ENCODE measurements at regions of chr17 and their contacts with region 1.

Region 1: GRCh38 chr17:40224718-40225550 is 5.8 kb downstream of the WIPF2 start:
- DNase-seq: no peak
- H3K4me3 ChIP-seq: no peak overlapping the region
- H3K27ac ChIP-seq: no peak overlapping the region
- H3K4me1 ChIP-seq: no peaks in the 10 kb centered on the region
- H3K27me3 ChIP-seq: no peaks in the 10 kb centered on the region
- CTCF ChIP-seq: no peak

Region 2: DNA sequence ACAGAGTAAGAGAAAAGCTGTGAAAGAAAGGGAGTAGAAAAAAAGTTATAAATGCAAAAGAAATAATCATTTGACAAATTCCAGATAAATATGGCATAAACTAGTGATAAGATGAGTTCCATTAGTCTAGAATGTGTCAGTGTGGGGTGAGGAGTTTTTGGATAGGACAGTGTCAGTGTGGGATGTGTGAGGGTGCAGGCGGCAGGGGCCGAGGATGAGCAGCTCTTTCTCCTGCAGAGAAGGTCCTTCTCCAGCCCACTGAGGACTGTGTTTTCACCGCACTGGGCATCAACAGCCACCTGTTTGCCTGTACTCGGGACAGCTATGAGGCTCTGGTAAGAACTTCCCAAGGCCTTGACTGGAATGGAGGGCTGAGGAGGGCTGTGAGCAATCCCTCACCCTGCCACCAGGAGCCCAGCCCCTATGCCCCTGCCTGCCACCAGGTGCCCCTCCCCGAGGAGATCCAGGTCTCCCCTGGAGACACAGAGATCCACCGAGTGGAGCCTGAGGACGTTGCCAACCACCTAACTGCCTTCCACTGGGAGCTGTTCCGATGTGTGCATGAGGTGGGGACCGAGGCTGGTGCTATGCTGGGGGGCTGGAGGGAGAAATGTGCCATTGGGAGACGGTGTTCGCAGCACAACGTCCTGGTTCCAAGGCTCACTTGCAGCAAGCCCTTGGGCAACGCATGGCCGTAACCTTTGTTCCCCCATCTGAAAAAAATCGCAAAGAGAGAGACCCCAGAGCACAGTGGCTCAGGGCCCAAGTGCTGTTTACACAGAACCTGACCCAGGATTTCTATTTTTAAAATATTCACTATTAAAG is 34.5 kb before region 1 on chr17:
- CTCF ChIA-PET with region 1: no interaction called
- dilution Hi-C with region 1: no loop called
- in situ Hi-C with region 1: no loop called
- intact Hi-C with region 1: no loop called
- DNase-seq: no peak
- H3K4me3 ChIP-seq: no peak overlapping the region
- H3K27ac ChIP-seq: no peak overlapping the region
- H3K4me1 ChIP-seq: peaks cover 24% of the 10 kb centered on the region
- H3K27me3 ChIP-seq: no peaks in the 10 kb centered on the region
- CTCF ChIP-seq: peak; percentile 28

Region 3: DNA sequence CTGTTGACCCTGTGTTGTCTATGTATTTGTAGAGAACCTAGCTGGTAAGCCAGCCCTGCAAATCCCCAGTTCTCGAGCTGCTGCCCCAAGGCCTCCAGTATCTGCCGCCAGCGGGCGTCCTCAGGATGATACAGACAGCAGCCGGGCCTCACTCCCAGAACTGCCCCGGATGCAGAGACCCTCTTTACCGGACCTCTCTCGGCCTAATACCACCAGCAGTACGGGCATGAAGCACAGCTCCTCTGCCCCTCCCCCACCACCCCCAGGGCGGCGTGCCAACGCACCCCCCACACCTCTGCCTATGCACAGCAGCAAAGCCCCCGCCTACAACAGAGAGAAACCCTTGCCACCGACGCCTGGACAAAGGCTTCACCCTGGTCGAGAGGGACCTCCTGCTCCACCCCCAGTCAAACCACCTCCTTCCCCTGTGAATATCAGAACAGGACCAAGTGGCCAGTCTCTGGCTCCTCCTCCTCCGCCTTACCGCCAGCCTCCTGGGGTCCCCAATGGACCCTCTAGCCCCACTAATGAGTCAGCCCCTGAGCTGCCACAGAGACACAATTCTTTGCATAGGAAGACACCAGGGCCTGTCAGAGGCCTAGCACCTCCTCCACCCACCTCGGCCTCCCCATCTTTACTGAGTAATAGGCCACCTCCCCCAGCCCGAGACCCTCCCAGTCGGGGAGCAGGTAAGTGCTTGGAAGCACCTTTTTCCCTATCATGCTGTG is 39.7 kb after region 1 on chr17:
- CTCF ChIA-PET with region 1: no interaction called
- dilution Hi-C with region 1: loop called (anchors 5 kb)
- in situ Hi-C with region 1: no loop called
- intact Hi-C with region 1: no loop called
- DNase-seq: no peak
- H3K4me3 ChIP-seq: no peak overlapping the region
- H3K27ac ChIP-seq: no peak overlapping the region
- H3K4me1 ChIP-seq: peaks cover 5% of the 10 kb centered on the region
- H3K27me3 ChIP-seq: no peaks in the 10 kb centered on the region
- CTCF ChIP-seq: no peak

Region 4: DNA sequence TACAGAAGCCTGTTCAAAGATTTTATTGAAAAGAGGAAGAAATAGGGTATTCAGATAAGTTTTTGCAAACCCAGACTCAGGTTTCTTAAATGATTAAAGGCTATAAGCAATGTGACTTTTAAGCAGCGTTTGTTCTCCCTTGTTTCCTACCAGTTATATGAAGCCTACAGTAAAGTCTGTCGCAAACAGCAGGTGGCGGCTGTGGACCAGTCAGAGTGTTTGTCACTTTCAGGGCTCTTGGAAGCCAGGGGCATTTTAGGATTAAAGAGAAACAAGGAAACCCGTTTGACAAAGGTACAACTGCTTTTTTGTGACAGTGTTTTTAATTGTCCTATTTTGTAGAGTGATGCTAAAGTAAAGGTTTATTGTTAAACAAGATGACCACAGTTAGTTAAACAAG is 76.4 kb after region 1 on chr17:
- CTCF ChIA-PET with region 1: no interaction called
- dilution Hi-C with region 1: no loop called
- in situ Hi-C with region 1: no loop called
- intact Hi-C with region 1: no loop called
- DNase-seq: no peak
- H3K4me3 ChIP-seq: no peak overlapping the region
- H3K27ac ChIP-seq: no peak overlapping the region
- H3K4me1 ChIP-seq: peaks cover 24% of the 10 kb centered on the region
- H3K27me3 ChIP-seq: no peaks in the 10 kb centered on the region
- CTCF ChIP-seq: peak in 1 of 2 donors; percentile 9